AG04449 (cell line): ENCODE measurements at regions of chr1 and their contacts with region 1.

Region 1: DNA sequence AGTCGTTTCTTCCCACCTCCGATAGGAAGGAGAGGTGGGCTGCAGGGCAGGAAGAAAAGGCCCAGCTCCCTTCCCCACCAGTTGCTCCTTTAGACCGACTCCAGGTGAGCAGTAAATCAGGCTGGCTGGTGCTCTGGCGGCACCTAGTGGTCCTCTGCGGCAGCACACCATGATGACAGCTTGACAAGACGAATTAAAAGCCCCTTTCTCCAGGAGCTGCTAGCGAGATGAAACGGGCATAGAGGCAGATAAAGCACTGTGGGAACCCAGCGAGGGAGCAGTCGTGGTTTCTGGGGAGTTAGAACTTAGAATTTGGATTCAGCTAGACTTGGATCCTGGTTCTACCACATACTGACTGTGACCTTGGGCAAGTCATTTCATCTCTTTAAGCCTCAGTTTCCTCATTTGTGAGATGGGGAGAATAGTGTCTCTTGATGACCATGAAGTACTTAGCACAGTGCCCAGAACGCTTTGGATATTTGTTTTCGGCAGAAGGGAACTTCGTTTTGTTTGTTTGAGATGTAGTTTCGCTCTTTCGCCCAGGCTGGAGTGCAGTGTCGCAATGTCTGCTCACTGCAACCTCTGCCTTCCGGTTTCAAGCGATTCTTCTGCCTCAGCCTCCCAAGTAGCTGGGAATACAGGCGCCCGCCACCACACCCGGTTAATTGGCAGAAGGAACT is 21.8 kb upstream of the COL9A2 start:
- DNase-seq: no peak
- H3K4me3 ChIP-seq: no peak overlapping the region
- CTCF ChIP-seq: peak; percentile 95

Region 2: GRCh38 chr1:39952359-39953110 is 386.4 kb before region 1 on chr1:
- CTCF ChIA-PET with region 1: no interaction called
- POLR2A ChIA-PET with region 1: no interaction called
- DNase-seq: no peak
- H3K4me3 ChIP-seq: no peak overlapping the region
- CTCF ChIP-seq: no peak

Region 3: GRCh38 chr1:40132383-40133311 is 206.2 kb before region 1 on chr1:
- CTCF ChIA-PET with region 1: interaction called, 23 read pairs
- POLR2A ChIA-PET with region 1: no interaction called
- DNase-seq: no peak
- H3K4me3 ChIP-seq: peak overlapping the region; percentile 49
- CTCF ChIP-seq: no peak

Region 4: GRCh38 chr1:40161125-40161887 is 177.6 kb before region 1 on chr1 and contains the start of gene RLF:
- CTCF ChIA-PET with region 1: interaction called, 433 read pairs
- POLR2A ChIA-PET with region 1: no interaction called
- DNase-seq: peak; percentile 50
- H3K4me3 ChIP-seq: peak within 1 kb of the TSS; percentile 90
- CTCF ChIP-seq: no peak

Region 5: GRCh38 chr1:40315239-40315794 is 23.6 kb before region 1 on chr1:
- CTCF ChIA-PET with region 1: interaction called, 93 read pairs
- POLR2A ChIA-PET with region 1: no interaction called
- DNase-seq: peak; percentile 10
- H3K4me3 ChIP-seq: peak overlapping the region; percentile 36
- CTCF ChIP-seq: peak; percentile 91

Region 6: DNA sequence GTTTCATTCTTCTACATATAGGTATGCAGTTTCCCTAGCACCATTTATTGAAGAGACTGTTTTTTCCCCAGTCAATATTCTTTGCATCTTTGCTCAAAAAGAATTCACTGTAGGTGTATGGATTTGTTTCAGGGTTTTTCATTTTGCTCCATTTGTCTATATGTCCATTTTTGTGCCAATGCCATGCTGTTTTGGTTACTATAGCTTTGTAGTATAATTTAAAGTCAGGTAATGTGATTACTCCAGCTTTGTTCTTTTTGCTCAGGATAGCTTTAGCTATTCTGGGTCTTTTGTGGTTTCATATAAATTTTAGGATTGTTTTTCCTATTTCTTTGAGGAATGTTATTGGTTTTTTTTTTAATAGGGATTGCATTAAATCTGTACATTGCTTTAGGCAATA is 18.7 kb after region 1 on chr1:
- CTCF ChIA-PET with region 1: interaction called, 17 read pairs
- POLR2A ChIA-PET with region 1: no interaction called
- DNase-seq: no peak
- H3K4me3 ChIP-seq: no peak overlapping the region
- CTCF ChIP-seq: no peak

Region 7: GRCh38 chr1:40404670-40405462 is 66.0 kb after region 1 on chr1:
- CTCF ChIA-PET with region 1: interaction called, 19 read pairs
- POLR2A ChIA-PET with region 1: no interaction called
- DNase-seq: no peak
- H3K4me3 ChIP-seq: no peak overlapping the region
- CTCF ChIP-seq: peak; percentile 36

Region 8: DNA sequence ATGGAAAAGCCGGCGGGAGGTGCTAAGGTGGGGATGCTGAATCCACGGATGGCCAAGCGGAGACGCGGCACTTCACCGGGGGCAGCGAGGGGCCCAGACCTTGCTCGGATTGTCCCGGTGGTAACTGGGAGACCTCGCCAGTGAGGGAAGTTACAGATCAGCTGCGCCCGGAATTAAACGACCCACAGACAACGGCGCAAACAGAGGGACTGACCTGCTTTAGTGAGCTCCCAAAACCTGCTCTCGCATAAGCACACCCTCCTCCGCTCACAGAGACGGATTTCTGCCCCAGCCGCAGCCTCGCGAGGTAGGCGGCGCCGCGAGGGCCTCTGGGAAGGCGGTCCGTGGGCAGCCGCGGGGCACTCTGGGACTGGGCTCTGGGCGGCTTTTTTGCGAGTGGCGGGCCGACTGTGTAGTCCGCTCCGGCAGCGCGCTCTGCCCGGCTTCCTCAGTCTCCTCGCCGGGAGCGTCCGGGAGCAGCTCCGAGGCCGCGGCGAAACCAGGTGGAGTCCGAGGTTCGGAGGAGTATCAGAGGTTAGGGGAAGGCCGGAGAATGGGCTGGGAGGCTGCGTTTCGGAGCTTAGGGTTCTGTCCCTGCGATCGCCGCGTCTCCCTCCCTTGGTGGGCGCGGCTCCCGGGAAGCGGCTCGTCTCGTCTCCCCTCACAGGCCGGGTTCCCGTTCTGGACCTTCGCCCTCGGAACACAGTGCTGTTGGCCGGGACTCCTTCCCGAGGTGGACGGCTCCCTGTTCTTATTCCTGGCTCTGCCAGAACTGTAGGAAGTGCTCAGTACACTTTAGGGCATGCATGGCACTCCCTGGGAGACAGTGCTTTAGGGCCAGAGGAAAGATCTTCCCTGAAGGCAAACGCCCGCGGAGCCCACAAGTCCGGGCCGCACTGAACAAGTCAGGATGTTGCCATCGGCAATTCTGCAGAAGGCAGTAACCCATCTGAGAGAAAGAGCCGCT is 169.8 kb after region 1 on chr1 and contains the start of gene EXO5:
- CTCF ChIA-PET with region 1: no interaction called
- POLR2A ChIA-PET with region 1: no interaction called
- DNase-seq: no peak
- H3K4me3 ChIP-seq: peak within 1 kb of the TSS; percentile 81
- CTCF ChIP-seq: no peak

Region 9: DNA sequence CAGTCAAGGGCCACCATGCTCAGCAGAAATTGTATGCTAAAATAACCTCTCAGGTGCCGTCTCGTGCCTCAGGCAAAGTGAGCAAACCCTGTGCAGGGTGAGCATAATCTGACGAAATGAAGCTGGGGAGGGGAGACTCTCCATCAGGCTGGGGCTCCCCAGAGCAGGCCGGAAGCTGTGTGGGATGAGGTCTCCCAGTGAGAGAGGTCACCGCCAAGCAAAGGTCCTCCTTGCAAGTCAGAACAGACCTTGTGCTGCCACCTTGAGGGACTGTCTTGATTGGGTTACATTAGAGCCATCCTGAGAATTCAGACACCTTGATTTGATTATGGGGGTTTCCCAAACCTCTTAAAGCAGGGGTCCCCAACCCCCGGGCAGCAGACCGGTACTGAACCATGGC is 256.7 kb after region 1 on chr1:
- CTCF ChIA-PET with region 1: no interaction called
- POLR2A ChIA-PET with region 1: no interaction called
- DNase-seq: no peak
- H3K4me3 ChIP-seq: no peak overlapping the region
- CTCF ChIP-seq: no peak